ENCODE measurements at regions of chr6 and their contacts with region 1.

Region 1: DNA sequence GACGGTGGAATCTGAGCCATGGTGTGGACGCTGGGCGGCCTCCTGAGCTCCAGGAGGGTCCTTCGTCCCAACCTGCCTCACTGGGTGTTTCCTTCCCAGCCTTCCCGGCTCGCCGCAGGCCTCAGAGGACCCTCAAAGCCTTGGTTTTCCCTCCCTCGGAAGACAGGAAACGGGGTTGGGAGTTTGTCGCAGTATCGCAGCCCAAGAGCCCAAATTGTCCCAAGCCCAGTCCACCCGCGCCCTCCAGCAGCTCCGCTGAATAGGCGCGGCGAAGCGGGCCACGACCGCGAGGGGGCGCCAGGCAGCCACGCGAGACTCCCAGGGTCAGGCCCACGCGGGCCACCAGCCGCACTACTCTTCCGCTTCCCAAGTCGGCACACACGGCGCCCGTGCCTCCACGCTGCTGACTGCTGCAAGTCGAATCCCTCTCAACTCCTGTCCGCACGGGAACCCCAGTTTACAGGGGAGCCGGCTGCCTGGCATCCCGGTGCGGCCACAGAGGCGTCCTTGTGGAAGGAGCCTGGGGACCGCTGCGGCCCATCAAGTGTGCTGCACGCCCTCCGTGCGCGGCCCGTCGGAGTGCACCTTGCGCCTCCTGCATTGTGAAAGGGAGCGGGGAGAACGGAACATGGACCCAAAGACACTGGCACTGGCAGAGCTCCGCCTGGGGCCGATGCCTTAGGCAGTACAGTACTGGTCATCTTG is 40.4 kb upstream of the HMGA1 start:
- DNase-seq: peak; percentile 92
- H3K4me3 ChIP-seq: peak overlapping the region; percentile 31 to 58 (median 50)
- H3K27ac ChIP-seq: no peak overlapping the region
- H3K4me1 ChIP-seq: peaks cover 0 to 11% (median 8%) of the 10 kb centered on the region in 4 donors
- H3K27me3 ChIP-seq: no peaks in the 10 kb centered on the region
- CTCF ChIP-seq: peak; percentile 85 to 98 (median 90)
- EP300 ChIP-seq: no peak
- POLR2A ChIP-seq: no peak

Region 2: DNA sequence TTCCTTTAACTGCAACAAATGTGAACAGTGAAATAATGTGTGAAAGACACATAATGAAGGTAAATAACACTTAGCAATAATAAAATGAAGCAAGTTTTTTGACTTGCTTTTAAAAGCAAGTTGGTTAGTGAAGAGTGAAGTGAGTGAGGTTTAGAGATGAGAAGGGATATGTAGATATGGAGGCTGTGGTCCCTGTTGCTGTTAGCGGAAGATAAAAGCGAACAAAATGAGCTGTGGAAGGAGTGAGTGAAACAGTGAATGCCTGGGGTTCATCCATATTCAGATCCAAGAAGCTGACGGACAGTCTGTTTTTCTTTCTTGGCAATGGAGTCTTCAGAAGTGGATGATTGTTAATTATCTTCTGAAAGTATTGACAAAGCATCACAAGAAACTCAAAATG is 718.4 kb before region 1 on chr6:
- intact Hi-C with region 1: no loop called
- DNase-seq: no peak
- H3K4me3 ChIP-seq: no peak overlapping the region
- H3K27ac ChIP-seq: no peak overlapping the region
- H3K4me1 ChIP-seq: no peaks in the 10 kb centered on the region
- H3K27me3 ChIP-seq: no peaks in the 10 kb centered on the region
- CTCF ChIP-seq: no peak
- EP300 ChIP-seq: no peak
- POLR2A ChIP-seq: no peak

Region 3: GRCh38 chr6:33744001-33744848 is 452.1 kb before region 1 on chr6:
- intact Hi-C with region 1: no loop called
- DNase-seq: peak; percentile 86
- H3K4me3 ChIP-seq: peak overlapping the region in 3 of 4 donors; percentile 45 to 49 (median 46)
- H3K27ac ChIP-seq: peak overlapping the region in 3 of 4 donors; percentile 90 to 93 (median 90)
- H3K4me1 ChIP-seq: peaks cover 0 to 63% (median 43%) of the 10 kb centered on the region in 4 donors
- H3K27me3 ChIP-seq: no peaks in the 10 kb centered on the region
- CTCF ChIP-seq: peak; percentile 92 to 96 (median 95)
- EP300 ChIP-seq: no peak
- POLR2A ChIP-seq: no peak

Region 4: DNA sequence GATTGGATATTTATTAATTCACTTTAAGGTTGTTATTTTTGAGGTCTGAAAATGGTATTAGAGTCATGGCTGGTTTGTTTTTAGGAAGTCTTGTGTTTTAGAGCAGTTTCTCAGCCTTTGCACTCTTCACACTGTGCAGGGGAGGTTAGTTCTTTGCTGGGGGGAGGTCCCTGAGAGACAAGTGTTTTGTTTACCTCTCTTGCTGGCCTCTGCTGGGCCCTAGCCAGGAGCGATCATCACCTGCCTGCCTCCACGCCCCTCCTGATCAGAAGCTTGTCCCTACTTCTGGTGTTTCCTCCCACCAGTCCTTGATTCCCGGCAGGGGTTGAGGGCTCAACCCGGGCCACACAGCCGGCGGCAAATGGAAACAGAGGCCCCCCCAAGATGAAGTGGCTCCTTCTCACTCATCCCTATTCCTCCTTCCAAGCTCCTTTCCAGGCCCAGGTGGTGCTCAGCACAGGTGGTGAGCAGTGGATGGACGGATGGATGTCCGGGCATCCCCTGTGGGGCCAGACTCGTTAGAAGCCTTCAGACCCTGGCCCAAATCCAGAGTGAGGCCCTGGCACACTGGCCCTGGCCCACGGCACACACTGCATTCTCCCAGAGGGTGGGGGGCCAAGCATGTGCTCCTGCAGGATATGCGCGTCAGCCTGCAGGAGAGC is 101.7 kb before region 1 on chr6:
- intact Hi-C with region 1: no loop called
- DNase-seq: no peak
- H3K4me3 ChIP-seq: no peak overlapping the region
- H3K27ac ChIP-seq: no peak overlapping the region
- H3K4me1 ChIP-seq: no peaks in the 10 kb centered on the region
- H3K27me3 ChIP-seq: peaks cover 0 to 42% (median 17%) of the 10 kb centered on the region in 3 donors
- CTCF ChIP-seq: no peak
- EP300 ChIP-seq: no peak
- POLR2A ChIP-seq: no peak

Region 5: DNA sequence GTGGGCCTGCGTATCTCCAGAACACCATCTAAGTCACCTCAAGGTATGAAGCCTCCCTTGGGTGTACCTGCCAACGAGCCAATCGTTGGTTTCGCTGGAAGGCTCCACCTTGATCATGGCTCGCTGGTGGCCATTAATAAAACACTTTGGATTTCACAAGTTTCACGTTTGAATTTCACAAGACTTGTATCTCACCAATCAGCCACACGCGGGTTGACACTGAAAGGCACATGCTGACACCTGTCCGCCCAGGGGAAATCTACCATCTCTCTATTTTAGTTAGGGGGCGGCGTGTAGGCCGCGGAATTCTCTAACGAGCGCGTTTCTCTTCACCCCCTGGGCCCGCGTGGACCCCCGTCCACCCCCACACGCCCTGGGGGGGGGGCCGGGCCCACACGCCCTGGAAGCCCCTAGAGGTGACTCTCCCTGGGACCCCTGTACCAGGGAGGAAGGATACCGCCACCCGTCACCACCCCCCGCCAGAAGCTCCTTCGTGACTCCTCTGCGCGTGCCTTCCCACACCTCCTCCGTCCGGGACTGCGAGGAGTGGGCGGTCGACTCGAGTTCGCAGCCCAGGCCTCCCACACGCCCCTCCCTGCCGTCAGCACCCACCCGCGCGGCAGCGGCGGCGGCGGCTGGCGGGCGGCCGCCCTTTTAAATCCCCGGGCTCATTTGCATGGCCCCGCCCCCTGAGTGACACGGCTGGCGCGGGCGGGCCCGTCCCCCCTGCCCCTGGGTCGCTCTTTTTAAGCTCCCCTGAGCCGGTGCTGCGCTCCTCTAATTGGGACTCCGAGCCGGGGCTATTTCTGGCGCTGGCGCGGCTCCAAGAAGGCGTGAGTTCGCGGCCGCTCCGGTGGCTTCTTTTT is 40.1 kb after region 1 on chr6 and contains the start of gene HMGA1:
- intact Hi-C with region 1: loop called (anchors 1 kb)
- DNase-seq: peak; percentile 95
- H3K4me3 ChIP-seq: peak within 1 kb of the TSS; percentile 65 to 81 (median 72)
- H3K27ac ChIP-seq: peak within 1 kb of the TSS; percentile 88 to 95 (median 93)
- H3K4me1 ChIP-seq: peaks cover 0 to 27% (median 18%) of the 10 kb centered on the region in 4 donors
- H3K27me3 ChIP-seq: no peaks in the 10 kb centered on the region
- CTCF ChIP-seq: no peak
- EP300 ChIP-seq: no peak
- POLR2A ChIP-seq: peak; percentile 39 to 82
- total RNA-seq, gene HMGA1: 6.9 to 12.1 (median 9.4) TPM

Region 6: DNA sequence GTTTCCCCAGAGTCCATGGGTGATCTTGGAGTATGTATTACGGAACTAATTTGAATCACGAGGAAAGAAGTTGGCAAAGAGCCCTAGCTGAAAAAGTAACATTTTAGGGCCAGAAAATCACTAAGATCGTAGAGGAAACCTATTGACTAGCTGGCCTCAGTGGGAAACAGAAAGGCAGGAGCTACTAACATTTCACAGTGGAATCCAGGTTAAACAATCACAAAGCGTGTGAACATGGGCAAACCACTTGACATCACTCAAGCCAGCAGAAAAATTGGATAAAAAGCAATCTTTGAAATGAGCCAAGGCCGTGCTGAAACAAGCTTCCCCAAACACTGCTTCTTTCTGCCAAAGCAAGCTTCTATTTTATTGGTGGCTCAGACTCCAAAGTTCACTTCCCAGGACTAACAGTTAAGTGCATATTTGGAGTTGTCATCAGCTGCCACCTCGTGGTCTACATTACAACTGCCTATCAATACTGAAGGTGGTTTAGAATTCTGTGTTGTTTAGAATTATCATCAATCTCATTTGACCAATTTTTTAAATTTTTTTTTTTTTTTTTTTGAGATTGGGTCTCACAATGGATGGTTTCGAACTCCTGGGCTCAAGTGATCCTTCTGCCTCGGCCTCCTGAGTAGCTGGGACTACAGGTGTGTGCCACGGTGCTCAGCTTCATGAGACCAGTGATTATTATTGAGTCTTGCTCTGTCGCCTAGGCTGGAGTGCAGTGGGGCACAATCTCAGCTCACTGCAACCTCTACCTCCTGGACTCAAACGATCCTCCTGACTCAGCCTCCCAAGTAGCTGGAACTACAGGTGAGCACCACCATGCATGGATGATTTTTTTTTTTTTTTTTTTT is 219.0 kb after region 1 on chr6:
- intact Hi-C with region 1: loop called (anchors 1 kb)
- DNase-seq: peak; percentile 78
- H3K4me3 ChIP-seq: no peak overlapping the region
- H3K27ac ChIP-seq: peak overlapping the region; percentile 60 to 73 (median 66)
- H3K4me1 ChIP-seq: peaks cover 0 to 11% (median 5%) of the 10 kb centered on the region in 4 donors
- H3K27me3 ChIP-seq: no peaks in the 10 kb centered on the region
- CTCF ChIP-seq: peak; percentile 35 to 78 (median 54)
- EP300 ChIP-seq: no peak
- POLR2A ChIP-seq: no peak

Region 7: DNA sequence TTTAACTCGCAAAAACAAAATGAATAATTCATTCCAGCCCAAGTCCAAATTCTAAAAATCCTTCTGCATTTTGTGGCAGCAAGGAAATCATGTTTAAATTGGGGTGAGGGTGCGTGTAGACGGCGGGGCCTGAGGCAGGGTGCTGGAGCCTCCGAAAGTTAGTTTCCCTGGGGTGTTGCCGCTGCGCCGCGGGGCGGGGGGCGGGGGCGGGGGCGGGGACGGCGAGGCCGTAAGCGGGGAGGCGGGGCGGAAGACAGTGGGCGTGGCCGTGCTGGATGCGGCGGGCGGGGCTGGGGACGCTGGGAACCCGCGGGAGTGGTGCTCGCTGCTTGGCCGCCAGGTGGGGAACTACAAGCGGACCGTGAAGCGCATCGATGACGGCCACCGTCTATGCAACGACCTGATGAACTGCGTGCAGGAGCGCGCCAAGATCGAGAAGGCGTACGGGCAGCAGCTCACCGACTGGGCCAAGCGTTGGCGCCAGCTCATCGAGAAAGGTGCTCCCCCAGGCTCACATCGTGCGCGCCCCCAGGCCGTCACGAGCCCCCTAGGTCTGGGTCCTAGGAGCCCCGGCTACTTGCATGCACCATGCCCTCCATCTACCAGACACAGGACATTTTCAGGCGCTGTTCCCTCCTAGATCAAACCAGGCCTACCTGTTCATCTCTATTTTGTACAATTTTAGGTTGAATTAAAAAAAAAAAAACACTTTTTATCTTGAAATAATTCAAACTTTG is 330.9 kb after region 1 on chr6:
- intact Hi-C with region 1: loop called (anchors 5 kb)
- DNase-seq: peak; percentile 97
- H3K4me3 ChIP-seq: peak overlapping the region in 3 of 4 donors; percentile 6 to 35 (median 30)
- H3K27ac ChIP-seq: peak overlapping the region; percentile 39 to 67 (median 58)
- H3K4me1 ChIP-seq: peaks cover 0 to 13% (median 8%) of the 10 kb centered on the region in 4 donors
- H3K27me3 ChIP-seq: no peaks in the 10 kb centered on the region
- CTCF ChIP-seq: peak; percentile 58 to 73 (median 62)
- EP300 ChIP-seq: no peak
- POLR2A ChIP-seq: no peak

Region 8: DNA sequence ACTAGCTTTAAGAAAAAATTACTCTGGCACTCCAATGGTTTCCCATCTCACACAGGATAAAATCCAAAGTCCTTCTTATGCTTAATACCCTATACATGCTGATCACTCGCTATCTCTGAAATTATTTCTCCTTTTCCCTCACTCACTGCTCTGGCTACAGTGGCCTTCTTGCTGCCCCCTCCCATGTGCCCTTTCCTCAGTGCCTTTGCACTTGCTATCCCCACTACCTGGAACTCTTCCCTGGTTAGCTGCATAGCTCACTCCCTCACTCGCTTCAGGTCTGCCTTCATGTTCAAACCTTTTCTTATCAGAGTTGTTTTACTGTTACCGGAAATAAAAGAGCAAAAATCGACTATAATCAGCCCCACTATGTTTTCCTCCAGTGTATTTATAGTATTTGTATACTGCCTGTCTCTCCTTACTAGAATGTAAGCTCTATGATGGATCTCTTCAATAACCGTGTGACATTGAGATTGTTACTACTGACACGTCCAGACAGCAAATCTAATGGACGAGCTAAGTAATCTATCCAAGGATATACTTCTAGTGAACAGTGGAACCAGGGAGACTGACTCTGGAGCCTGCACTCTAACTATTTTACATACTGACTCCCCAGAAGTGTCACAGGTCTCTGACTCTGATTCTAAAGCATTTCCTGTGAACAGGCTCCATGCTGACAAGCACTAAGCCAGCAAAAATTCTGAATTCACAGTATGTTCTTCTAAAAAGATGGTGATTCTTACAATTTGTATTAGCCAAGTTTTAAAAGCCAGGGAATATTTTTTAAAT is 1467.4 kb after region 1 on chr6:
- intact Hi-C with region 1: no loop called
- DNase-seq: no peak
- H3K4me3 ChIP-seq: no peak overlapping the region
- H3K27ac ChIP-seq: peak overlapping the region in 1 of 4 donors; percentile 26
- H3K4me1 ChIP-seq: peaks cover 0 to 53% (median 44%) of the 10 kb centered on the region in 4 donors
- H3K27me3 ChIP-seq: no peaks in the 10 kb centered on the region
- CTCF ChIP-seq: no peak
- EP300 ChIP-seq: no peak
- POLR2A ChIP-seq: no peak

Measured in sigmoid colon (tissue), 7 donors.